ENCODE measurements at regions of chr17 and their contacts with region 1.

Region 1: GRCh38 chr17:43576563-43577229 is 30.6 kb upstream of the ETV4 start:
- DNase-seq: peak; percentile 83
- H3K4me3 ChIP-seq: no peak overlapping the region; a peak in 1 of 4 replicates
- H3K27ac ChIP-seq: no peak overlapping the region
- H3K4me1 ChIP-seq: peaks cover 10% of the 10 kb centered on the region in 2 experiments; a peak in 2 of 4 replicates
- H3K27me3 ChIP-seq: no peaks in the 10 kb centered on the region
- CTCF ChIP-seq: peak; percentile 90
- EP300 ChIP-seq: no peak
- RAD21 ChIP-seq: peak; percentile 97

Region 2: GRCh38 chr17:43517615-43518386 is 58.9 kb before region 1 on chr17:
- CTCF ChIA-PET with region 1: interaction called, 10 read pairs
- POLR2A ChIA-PET with region 1: no interaction called
- DNase-seq: no peak
- H3K4me3 ChIP-seq: no peak overlapping the region
- H3K27ac ChIP-seq: peak overlapping the region in 1 of 2 experiments; percentile 84; a peak in 2 of 4 replicates
- H3K4me1 ChIP-seq: peaks cover 0 to 21% of the 10 kb centered on the region in 2 experiments; a peak in 2 of 4 replicates
- H3K27me3 ChIP-seq: no peaks in the 10 kb centered on the region
- CTCF ChIP-seq: no peak
- EP300 ChIP-seq: no peak
- RAD21 ChIP-seq: no peak

Region 3: GRCh38 chr17:43546319-43547188 is 30.1 kb before region 1 on chr17 and contains the start of gene ETV4:
- CTCF ChIA-PET with region 1: interaction called, 21 read pairs
- POLR2A ChIA-PET with region 1: no interaction called
- DNase-seq: peak; percentile 97
- H3K4me3 ChIP-seq: peak within 1 kb of the TSS; percentile 61 to 69
- H3K27ac ChIP-seq: peak within 1 kb of the TSS; percentile 83 to 95
- H3K4me1 ChIP-seq: peaks cover 12 to 24% of the 10 kb centered on the region in 2 experiments; a peak in 3 of 4 replicates
- H3K27me3 ChIP-seq: no peaks in the 10 kb centered on the region
- CTCF ChIP-seq: no peak
- EP300 ChIP-seq: no peak
- RAD21 ChIP-seq: no peak
- polyA plus RNA-seq, gene ETV4: 27.3 and 33.2 TPM in 2 replicates

Region 4: DNA sequence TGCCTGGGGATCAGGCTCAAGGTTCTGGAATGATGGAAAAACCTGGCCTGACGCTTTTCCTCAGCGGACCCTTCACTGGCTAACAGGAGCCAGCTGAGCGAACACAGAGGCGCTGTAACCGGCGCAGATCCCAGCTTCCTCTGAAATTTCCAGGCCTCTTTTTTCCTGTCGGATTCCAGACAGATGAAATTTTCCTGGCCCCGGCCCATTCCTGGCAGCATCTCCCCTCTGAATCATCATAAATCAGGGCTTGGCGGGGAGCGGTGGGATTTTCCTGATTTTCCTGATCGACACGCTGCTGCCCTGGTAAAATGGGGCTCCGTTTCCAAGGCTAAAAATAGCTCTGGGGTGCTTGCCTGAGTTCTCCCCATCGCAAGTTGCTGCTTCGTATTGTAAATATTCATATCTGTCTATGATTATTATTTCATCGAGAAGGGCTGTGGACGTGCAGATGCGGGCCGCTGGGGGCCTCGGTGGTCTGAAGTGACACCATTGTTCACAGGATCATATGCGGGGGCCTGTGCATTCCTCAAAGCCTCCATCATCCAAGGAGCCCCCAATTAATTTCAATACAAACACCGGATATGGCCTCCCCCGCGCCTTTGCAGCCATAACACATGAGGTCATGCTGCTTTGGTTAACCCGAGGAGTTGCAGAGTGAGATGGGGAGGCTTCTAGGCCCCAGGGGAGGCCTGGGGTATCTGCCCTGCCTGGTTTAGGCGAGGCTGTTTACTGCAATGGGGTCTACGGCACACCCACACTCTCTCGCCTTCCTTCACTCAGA is 15.3 kb after region 1 on chr17:
- CTCF ChIA-PET with region 1: interaction called, 19 read pairs
- POLR2A ChIA-PET with region 1: no interaction called
- DNase-seq: peak; percentile 52
- H3K4me3 ChIP-seq: no peak overlapping the region
- H3K27ac ChIP-seq: peak overlapping the region; percentile 60 to 94
- H3K4me1 ChIP-seq: peaks cover 6 to 22% of the 10 kb centered on the region in 2 experiments; a peak in 3 of 4 replicates
- H3K27me3 ChIP-seq: no peaks in the 10 kb centered on the region
- CTCF ChIP-seq: no peak
- EP300 ChIP-seq: peak in 1 of 2 experiments; percentile 68; a peak in 2 of 4 replicates
- RAD21 ChIP-seq: no peak

Region 5: GRCh38 chr17:43628089-43628650 is 51.5 kb after region 1 on chr17:
- CTCF ChIA-PET with region 1: interaction called, 10 read pairs
- POLR2A ChIA-PET with region 1: no interaction called
- DNase-seq: no peak
- H3K4me3 ChIP-seq: no peak overlapping the region
- H3K27ac ChIP-seq: no peak overlapping the region
- H3K4me1 ChIP-seq: no peaks in the 10 kb centered on the region; a peak in 1 of 4 replicates
- H3K27me3 ChIP-seq: no peaks in the 10 kb centered on the region
- CTCF ChIP-seq: no peak
- EP300 ChIP-seq: no peak
- RAD21 ChIP-seq: no peak

Region 6: GRCh38 chr17:43694077-43694870 is 117.6 kb after region 1 on chr17:
- CTCF ChIA-PET with region 1: interaction called, 46 read pairs
- POLR2A ChIA-PET with region 1: no interaction called
- DNase-seq: peak; percentile 86
- H3K4me3 ChIP-seq: peak overlapping the region in 1 of 2 experiments; percentile 39; a peak in 1 of 4 replicates
- H3K27ac ChIP-seq: no peak overlapping the region
- H3K4me1 ChIP-seq: peaks cover 5 to 7% of the 10 kb centered on the region in 2 experiments; a peak in 2 of 4 replicates
- H3K27me3 ChIP-seq: no peaks in the 10 kb centered on the region
- CTCF ChIP-seq: peak; percentile 96
- EP300 ChIP-seq: no peak
- RAD21 ChIP-seq: peak; percentile 99